Right lobe of liver (tissue), 6 donors: ENCODE measurements at regions of chr18 and their contacts with region 1.

Region 1: GRCh38 chr18:35756506-35757117 is 175.1 kb downstream of the GALNT1 start:
- DNase-seq: peak in 1 of 3 donors; percentile 57
- ATAC-seq: peak; percentile 72 to 85 (median 80)
- H3K4me3 ChIP-seq: no peak overlapping the region
- H3K27ac ChIP-seq: no peak overlapping the region
- H3K4me1 ChIP-seq: no peaks in the 10 kb centered on the region
- H3K27me3 ChIP-seq: no peaks in the 10 kb centered on the region
- CTCF ChIP-seq: peak; percentile 72 to 92 (median 78)
- POLR2A ChIP-seq: no peak

Region 2: GRCh38 chr18:35949903-35950627 is 193.5 kb after region 1 on chr18:
- intact Hi-C with region 1: loop called in 1 of 2 experiments (anchors 5 kb)
- DNase-seq: peak; percentile 45 to 65 (median 55)
- ATAC-seq: peak; percentile 90 to 98 (median 94)
- H3K4me3 ChIP-seq: peak overlapping the region; percentile 52 to 61 (median 56)
- H3K27ac ChIP-seq: no peak overlapping the region
- H3K4me1 ChIP-seq: peaks cover 0 to 6% (median 3%) of the 10 kb centered on the region in 4 donors
- H3K27me3 ChIP-seq: no peaks in the 10 kb centered on the region
- CTCF ChIP-seq: peak; percentile 84 to 91 (median 86)
- POLR2A ChIP-seq: no peak